AG04449 (cell line): ENCODE measurements at regions of chr14 and their contacts with region 1.

Region 1: DNA sequence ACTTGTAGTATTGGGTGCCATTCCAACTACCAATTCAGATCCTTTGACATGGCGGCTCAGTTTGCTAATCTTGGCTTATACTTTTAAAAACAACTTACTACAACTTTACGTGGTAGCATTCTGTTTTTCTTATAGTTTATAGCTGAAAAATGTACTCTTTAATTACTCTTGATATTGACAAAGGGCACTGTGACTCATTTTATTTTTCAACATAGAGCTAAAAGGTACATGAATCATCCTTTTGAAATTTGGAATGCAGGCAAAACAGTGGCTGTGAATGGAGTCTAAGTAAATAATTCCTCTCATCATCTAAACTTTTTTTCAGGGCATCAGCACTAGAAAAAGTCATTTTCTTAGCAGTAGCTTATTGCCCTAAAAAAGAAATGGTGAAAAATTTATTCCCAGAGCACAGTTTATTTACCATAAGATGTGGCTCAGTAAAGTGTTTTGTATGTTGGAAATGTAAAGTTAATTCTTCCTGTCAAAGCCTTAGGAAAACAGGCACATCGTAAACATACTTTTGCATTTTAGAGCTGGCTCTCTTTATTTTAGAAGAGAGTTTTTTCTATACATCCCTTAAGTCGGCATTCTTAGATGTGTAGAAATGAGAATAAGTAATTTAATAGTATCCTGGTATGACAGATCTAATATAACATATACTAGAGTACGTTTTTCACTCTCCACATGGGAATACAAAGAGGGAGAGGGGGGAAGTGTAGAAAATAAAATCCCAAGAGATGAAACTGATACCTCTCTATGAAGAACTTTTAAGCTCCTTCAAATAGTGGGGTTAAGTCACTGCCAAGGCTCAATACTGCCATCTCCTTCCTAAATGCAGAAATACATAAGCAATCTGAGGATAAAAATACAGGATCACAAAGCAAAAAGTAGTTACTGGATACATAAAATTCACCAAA is 55.2 kb downstream of the SLC25A21 start:
- DNase-seq: no peak
- H3K4me3 ChIP-seq: no peak overlapping the region
- CTCF ChIP-seq: peak; percentile 55

Region 2: DNA sequence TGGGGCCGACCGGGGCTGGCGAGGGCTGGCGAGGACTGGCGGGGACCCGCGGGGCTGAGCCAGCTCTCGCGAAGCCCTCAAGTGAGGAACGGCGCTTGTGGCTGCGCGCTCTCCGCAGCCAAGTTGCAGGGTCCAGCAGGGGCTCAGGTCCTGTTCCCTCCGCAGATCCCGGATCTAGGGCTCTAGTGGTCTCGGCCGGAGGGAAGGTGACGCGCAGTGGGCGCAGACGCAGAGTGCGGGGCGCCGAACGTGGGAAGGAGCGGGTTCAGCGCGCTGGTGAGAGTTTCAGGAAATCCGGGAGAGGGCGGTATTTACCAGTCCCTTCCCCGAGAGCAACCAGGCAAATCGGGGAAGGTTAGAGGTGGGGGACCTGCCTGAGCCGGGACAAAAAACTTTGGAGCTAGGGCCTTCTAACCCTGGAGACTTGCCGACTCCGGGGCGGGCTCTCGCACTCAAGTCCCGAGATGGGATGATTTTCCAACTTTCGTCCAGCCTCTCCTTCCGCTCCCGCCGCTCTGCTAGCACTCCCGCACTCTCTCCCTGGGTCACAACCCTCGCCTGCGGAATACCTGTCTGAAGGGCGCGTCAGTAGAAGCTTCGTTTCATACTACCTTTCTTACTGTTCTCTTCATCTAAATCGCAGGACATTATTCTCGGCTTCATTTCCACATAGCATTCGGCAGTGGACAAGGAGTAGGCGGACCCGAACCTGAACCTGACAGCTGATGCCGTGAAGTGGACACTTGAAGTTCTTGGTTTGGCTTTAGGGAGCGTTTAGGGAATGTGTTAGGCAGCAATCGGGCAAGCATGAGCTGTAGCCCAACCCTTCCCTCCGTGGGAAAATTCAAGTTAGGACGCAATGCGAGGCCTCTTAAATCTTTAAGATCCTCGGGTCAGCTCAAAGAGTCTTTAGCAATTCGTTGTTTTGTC is 469.1 kb before region 1 on chr14:
- CTCF ChIA-PET with region 1: interaction called, 38 read pairs
- POLR2A ChIA-PET with region 1: no interaction called
- DNase-seq: no peak
- H3K4me3 ChIP-seq: peak overlapping the region; percentile 52
- CTCF ChIP-seq: peak; percentile 60

Region 3: DNA sequence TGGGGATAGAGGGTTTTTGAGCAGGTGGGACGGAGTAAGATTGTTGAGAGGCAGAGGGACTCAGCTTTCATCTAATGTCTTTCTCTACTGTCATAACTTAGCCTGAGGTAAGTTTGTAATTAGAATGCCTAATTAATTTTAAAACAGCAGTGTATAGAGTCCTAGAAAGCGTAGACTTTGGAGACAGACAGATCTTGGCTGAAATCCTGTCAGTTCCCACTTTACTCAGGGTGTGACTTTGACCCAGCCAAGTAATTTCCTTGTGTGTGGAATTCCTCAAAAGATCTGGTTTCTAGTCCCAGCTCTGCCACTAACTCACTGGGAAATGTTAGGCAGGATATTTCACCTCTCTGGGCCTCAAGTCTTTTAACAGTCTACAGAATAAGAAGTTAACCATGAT is 19.1 kb before region 1 on chr14:
- CTCF ChIA-PET with region 1: interaction called, 12 read pairs
- POLR2A ChIA-PET with region 1: no interaction called
- DNase-seq: no peak
- H3K4me3 ChIP-seq: no peak overlapping the region
- CTCF ChIP-seq: no peak